Dendritic cell treated with granulocyte-macrophage colony-stimulating factor and Interleukin-4, amounts not matched to agents 40 ng/mL and 50 ng/mL, for 4 days (primary cell): ENCODE measurements at regions of chr1 and their contacts with region 1.

Region 1: GRCh38 chr1:101288491-101288944 is 51.7 kb downstream of the S1PR1 start:
- H3K4me3 Mint-ChIP-seq: no peak overlapping the region
- H3K27ac Mint-ChIP-seq: peak overlapping the region; percentile 36
- H3K4me1 Mint-ChIP-seq: peaks cover 46% of the 10 kb centered on the region
- H3K27me3 Mint-ChIP-seq: peaks cover 2% of the 10 kb centered on the region

Region 2: DNA sequence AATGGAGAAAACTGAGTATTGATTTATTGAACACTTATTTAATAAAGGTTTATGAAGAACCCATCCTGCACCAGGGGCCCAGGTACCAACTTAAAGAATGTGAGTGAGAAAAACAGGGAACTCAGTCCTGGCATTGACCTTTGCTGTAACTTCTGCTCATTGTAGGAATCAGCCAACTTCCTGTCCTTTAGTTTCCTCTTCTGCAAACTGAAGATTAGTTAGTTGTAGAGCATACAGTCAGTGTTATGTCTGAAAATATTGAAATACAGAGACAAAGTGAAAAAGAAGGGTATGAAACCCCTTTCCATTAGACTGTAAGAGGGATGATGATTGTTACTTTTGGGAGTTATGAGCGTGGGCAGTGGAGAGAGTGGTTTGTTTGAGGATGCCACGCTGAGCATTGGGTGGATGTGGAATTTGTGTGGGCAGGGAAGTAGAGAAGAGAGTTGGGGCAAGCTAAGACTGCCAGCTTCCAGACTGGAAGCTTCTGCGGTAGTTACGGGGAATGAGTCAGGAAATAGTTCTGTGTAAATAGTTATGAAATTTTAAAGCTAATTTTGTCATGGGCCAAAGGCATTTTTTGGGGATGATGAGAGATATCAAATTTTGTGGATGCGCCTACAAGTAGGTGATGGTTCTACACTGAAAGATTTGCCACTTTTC is 661.3 kb before region 1 on chr1:
- intact Hi-C with region 1: loop called (anchors 5 kb)
- H3K4me3 Mint-ChIP-seq: peak overlapping the region; percentile 1
- H3K27ac Mint-ChIP-seq: peak overlapping the region; percentile 58
- H3K4me1 Mint-ChIP-seq: peaks cover 42% of the 10 kb centered on the region
- H3K27me3 Mint-ChIP-seq: no peaks in the 10 kb centered on the region

Region 3: DNA sequence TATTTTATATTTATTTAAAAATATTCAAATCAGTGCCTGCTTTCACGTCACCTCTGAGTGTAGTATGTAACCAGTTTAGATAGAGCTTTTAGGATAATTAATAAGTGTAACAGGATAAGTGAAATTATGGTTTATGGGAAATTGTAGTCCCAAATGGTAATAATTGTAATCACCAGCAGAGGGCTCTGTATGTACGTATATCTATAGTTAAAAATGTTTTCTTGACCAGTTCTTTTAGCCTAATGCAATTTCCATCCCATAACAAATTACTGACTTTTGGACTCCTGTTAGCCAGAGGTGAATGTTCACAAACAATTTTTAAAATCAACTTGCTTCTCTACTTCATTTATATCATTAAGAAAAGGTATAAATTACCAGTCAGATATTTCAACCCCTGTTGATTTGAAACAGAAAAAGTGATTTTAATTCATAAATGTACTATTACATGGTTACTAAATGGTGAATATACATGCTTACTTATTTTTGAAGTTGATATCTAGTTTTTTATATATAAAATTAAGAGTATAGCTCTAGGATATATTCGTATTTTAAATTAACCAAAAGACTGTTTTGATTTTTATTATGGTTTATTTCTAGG is 367.3 kb before region 1 on chr1:
- intact Hi-C with region 1: loop called (anchors 1 kb)
- H3K4me3 Mint-ChIP-seq: no peak overlapping the region
- H3K27ac Mint-ChIP-seq: no peak overlapping the region
- H3K4me1 Mint-ChIP-seq: peaks cover 8% of the 10 kb centered on the region
- H3K27me3 Mint-ChIP-seq: no peaks in the 10 kb centered on the region

Region 4: DNA sequence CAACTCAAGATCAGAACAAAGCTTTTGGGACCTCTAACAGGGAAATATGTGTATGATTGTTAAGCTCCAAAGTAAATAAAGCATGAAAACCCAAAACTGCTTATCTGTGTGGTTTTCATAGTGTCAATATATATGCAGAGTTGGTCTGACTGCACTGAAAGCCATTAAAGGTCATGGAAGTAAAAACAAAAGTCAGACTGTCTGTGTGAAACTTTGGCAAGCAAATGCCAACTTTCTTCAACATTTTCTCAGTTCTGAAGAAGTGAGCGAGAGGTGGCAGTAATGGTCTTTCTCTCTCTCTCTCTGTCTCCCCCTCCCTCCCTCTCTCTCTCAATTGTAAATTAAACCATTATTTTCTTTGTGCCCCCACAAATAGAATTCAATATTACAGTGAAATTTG is 151.8 kb before region 1 on chr1:
- intact Hi-C with region 1: loop called (anchors 5 kb)
- H3K4me3 Mint-ChIP-seq: no peak overlapping the region
- H3K27ac Mint-ChIP-seq: no peak overlapping the region
- H3K4me1 Mint-ChIP-seq: peaks cover 30% of the 10 kb centered on the region
- H3K27me3 Mint-ChIP-seq: no peaks in the 10 kb centered on the region

Region 5: DNA sequence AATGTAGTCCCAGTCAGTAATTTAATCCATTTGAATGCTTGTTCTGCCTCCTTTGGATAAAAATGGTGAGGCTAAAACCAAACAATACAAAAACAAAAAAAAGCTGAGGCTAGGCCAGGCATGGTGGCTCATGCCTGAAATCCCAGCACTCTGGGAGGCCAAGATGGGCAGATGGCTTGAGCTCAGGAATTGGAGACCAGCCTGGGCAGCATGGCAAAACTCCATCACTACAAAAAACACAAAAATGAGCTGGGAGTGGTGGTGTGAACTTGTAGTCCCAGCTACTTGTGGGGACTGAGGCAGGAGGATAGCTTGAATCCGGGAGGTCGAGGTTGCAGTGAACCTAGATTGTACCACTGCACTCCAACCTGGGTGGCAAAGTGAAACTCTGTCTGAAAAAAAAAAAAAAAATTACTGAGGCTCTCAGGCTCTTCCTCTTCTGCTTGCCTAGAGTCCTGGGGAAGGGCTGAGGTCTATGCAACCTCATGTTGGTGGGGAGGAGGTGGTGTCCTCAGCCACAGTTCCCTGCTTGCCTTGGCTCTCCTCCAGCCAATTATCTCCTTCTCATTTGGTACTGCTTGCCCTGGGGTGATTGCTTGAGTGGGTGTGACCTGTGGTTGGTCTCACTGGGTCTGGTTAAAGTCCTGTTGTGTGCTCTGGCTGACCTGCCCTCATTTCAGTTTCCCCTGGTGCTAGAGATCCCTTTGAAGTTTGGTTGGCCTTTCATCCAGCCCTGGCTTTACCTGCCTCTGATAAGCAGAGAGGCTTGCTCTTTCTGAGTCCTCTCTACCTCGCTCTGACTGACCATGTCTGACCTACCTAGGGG is 30.8 kb before region 1 on chr1:
- intact Hi-C with region 1: loop called (anchors 2 kb)
- H3K4me3 Mint-ChIP-seq: no peak overlapping the region
- H3K27ac Mint-ChIP-seq: peak overlapping the region; percentile 71
- H3K4me1 Mint-ChIP-seq: peaks cover 61% of the 10 kb centered on the region
- H3K27me3 Mint-ChIP-seq: no peaks in the 10 kb centered on the region